ENCODE measurements at regions of chr11 and their contacts with region 1.

Region 1: DNA sequence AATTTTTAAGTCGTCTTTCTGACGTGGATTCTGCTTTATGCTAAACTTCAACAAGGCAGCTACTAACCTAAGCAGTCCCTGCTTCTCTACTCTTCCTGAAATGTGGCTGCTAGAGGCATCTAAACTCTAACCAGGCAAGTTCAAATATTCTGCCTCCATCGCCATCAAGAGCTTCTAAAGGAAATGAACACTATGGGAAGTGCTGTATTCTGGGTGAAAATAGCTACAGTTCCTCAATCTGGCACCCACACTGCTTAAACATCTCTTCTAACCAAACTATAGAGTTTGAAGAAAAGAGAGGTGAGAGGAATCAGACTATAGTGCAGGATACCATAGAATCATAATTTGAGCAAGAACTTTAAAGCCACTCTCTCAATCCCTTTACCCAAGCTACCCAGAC is 6.3 kb downstream of the NRIP3 start:
- DNase-seq: no peak
- ATAC-seq: no peak
- H3K4me3 ChIP-seq: no peak overlapping the region
- H3K27ac ChIP-seq: no peak overlapping the region
- H3K4me1 ChIP-seq: peaks cover 16% of the 10 kb centered on the region
- H3K27me3 ChIP-seq: no peaks in the 10 kb centered on the region
- CTCF ChIP-seq: no peak

Region 2: DNA sequence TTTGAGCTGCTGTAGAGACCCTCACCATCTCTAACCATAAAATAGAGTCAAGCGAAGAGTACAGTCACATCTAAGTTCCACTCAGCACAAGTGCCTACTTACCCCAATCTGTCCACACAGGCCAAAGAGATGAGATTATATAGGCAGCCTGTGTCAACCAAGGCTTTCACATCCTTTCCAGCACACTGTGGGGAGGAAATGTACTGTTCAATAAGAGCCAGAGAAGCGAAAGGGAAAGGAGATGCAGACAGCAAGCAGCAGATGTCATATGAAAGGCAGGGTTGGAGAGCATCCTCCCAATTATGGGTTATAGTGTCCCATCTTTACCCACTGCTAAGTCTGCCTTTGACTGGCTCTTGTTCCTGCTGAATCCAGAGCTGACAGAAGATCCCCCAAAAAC is 10.0 kb before region 1 on chr11:
- CTCF ChIA-PET with region 1: no interaction called
- POLR2A ChIA-PET with region 1: no interaction called
- in situ Hi-C with region 1: no loop called
- intact Hi-C with region 1: no loop called
- DNase-seq: no peak
- ATAC-seq: no peak
- H3K4me3 ChIP-seq: no peak overlapping the region
- H3K27ac ChIP-seq: no peak overlapping the region
- H3K4me1 ChIP-seq: no peaks in the 10 kb centered on the region; the same call in 1 of the 2 replicates
- H3K27me3 ChIP-seq: no peaks in the 10 kb centered on the region
- CTCF ChIP-seq: no peak

Region 3: GRCh38 chr11:9015677-9016076 is 18.2 kb after region 1 on chr11:
- CTCF ChIA-PET with region 1: interaction called, 10 read pairs
- POLR2A ChIA-PET with region 1: no interaction called
- in situ Hi-C with region 1: no loop called
- intact Hi-C with region 1: no loop called
- DNase-seq: peak; percentile 81
- ATAC-seq: peak; percentile 92
- H3K4me3 ChIP-seq: no peak overlapping the region
- H3K27ac ChIP-seq: no peak overlapping the region
- H3K4me1 ChIP-seq: no peaks in the 10 kb centered on the region
- H3K27me3 ChIP-seq: no peaks in the 10 kb centered on the region
- CTCF ChIP-seq: peak; percentile 96

Measured in Panc1 (cell line).